Mammary epithelial cell (primary cell): ENCODE measurements at regions of chr7 and their contacts with region 1.

Region 1: GRCh38 chr7:34430458-34430857 is 227.6 kb upstream of the NPSR1 start:
- DNase-seq: peak; percentile 55
- H3K4me3 ChIP-seq: no peak overlapping the region
- H3K27ac ChIP-seq: no peak overlapping the region
- H3K4me1 ChIP-seq: no peaks in the 10 kb centered on the region
- H3K27me3 ChIP-seq: no peaks in the 10 kb centered on the region
- CTCF ChIP-seq: peak; percentile 85 to 93

Region 2: DNA sequence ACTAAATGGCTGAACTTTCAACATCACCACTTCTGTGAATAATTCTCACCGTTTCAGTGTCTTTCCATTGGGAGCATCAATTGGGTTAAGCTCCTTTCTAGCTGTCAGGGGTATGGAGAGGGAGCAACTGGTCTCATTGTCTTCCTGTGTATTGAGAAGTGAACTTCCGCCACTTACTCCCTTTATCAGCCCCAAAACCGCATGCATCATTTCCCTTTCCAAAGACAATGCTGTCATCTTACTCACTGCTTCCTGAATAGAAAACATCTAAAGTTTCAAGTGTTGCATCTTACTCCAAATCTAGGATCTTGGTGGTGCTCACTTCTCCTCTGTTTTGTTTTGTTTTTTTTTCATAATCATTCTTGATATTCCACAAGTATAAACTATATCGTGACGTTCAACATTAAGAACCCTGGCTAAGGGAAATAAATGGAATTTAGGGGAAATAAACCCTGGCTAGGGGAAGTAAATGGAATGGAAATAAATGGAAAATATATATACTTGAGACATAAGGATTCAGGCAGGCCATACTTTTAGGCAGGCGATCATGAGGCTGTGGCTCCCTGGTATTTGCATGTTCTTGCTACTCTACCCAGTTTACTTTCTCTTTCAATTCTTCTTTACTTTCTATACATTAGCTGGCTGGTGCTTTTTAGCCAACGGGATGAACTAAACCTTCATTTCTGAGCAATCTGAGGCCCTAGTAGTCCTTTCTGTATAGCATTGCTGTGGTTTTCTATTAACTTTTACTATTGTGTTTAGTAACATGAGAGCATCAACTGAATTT is 153.2 kb before region 1 on chr7:
- CTCF ChIA-PET with region 1: no interaction called
- dilution Hi-C with region 1: no loop called
- in situ Hi-C with region 1: no loop called
- intact Hi-C with region 1: loop called (anchors 1 kb)
- DNase-seq: no peak
- H3K4me3 ChIP-seq: no peak overlapping the region
- H3K27ac ChIP-seq: no peak overlapping the region
- H3K4me1 ChIP-seq: no peaks in the 10 kb centered on the region
- H3K27me3 ChIP-seq: no peaks in the 10 kb centered on the region
- CTCF ChIP-seq: no peak

Region 3: GRCh38 chr7:34396437-34397065 is 33.9 kb before region 1 on chr7:
- CTCF ChIA-PET with region 1: no interaction called
- dilution Hi-C with region 1: no loop called
- in situ Hi-C with region 1: no loop called
- intact Hi-C with region 1: no loop called
- DNase-seq: no peak
- H3K4me3 ChIP-seq: no peak overlapping the region
- H3K27ac ChIP-seq: no peak overlapping the region
- H3K4me1 ChIP-seq: no peaks in the 10 kb centered on the region
- H3K27me3 ChIP-seq: no peaks in the 10 kb centered on the region
- CTCF ChIP-seq: no peak

Region 4: DNA sequence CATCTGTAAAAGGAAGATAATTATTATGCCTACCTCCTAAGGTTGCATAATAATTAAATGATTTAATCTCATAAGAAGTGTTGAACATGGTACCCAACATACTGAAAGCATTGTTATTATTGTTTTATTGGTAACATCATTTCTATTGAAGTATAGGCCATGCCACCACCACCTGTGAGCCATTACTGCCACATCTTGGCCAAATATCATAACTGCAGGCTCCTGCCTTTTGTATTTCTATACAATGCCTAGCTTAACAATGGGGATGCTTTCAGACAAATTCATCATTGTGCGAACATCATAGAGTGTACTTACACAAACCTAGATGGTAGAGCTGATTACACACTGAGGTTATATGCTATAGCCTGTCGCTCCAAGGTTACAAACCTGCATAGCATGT is 166.4 kb after region 1 on chr7:
- CTCF ChIA-PET with region 1: no interaction called
- dilution Hi-C with region 1: no loop called
- in situ Hi-C with region 1: no loop called
- intact Hi-C with region 1: loop called (anchors 1 kb)
- DNase-seq: peak; percentile 16
- H3K4me3 ChIP-seq: no peak overlapping the region
- H3K27ac ChIP-seq: no peak overlapping the region
- H3K4me1 ChIP-seq: no peaks in the 10 kb centered on the region
- H3K27me3 ChIP-seq: no peaks in the 10 kb centered on the region
- CTCF ChIP-seq: peak; percentile 72 to 74